ENCODE measurements at regions of chr4 and their contacts with region 1.

Region 1: DNA sequence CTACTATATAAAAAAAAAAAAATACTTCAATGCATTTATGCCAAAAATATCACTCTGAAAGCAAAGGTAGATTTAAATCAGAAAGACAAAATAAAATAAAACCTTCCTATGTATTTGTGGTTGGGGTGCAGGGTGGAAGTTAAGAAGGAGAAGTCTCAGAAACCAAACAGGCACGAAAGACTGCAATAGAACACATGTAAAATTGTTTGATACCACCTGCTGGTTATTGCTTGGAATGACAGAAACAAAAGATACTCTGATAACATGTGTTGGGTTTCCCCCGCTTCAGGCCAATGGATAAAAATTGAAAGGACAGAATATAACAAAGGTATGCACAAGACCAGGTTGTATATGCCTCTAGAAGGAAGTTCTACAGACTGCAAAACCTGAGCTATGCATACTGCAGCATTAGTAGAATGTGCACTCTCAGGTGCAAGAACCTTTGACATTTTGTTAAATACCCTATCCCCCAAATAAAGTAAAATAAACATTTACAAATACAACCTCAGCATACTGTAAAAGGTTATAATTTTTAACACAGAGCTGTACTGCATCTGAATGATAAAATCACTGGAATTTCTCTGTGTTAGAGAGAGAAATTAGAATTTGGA is 118.8 kb downstream of the GABRA2 start:
- DNase-seq: no peak
- ATAC-seq: no peak

Region 2: DNA sequence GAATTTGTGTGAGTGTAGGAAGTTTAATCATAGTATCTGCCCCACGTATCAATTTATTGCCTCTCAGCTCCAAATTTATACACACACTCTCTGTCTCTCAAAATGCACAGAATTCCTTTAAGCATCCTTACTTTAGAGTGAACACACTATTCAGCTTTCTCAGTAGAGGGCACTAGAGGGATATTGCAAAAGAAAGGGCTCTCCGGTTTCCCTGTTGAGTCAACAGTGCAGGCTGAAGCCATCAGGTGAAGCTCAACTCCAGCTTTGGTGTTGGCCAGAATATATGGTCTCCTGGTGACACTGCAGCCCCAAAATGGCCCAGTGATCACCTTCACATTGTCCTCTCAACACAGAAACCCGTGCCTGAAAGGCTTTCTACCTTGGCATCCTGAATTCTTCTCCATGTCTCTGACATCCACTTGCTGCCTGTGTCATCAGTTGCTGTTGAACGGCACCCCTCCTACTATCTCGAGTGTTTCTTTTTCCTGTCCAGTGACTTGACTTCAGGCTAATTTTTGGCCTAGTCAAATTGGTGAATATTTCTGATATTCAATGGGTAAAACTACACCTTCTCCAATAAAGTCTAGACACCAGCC is 817.7 kb before region 1 on chr4:
- intact Hi-C with region 1: loop called (anchors 5 kb)
- DNase-seq: no peak
- ATAC-seq: peak; percentile 39

Region 3: GRCh38 chr4:45550766-45551366 is 720.2 kb before region 1 on chr4:
- intact Hi-C with region 1: loop called (anchors 5 kb)
- DNase-seq: no peak
- ATAC-seq: no peak

Region 4: DNA sequence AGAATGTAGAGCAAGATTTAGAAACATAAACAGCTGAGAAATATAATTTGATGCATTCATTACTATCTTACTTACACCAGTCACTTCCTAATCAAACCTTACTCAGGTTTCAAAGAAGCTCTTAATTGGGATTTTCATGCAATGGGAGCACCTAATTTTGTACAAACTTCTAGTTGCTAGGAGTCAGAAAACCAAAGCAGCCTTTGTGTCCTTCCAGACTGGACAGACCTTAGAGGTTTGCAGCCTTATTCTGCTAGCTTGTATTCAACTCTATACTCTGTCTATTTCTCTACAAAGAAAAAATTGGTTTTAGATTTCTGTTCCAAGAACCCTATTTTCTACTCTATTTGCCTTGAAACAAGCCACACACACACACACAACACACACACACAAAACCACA is 99.4 kb after region 1 on chr4:
- intact Hi-C with region 1: no loop called
- DNase-seq: no peak
- ATAC-seq: no peak

Measured in Right ventricle myocardium inferior (tissue), 1 donor.